Caco-2 (cell line): ENCODE measurements at regions of chr7 and their contacts with region 1.

Region 1: GRCh38 chr7:46145412-46145811 is 224.3 kb upstream of the IGFBP3 start:
- DNase-seq: peak; percentile 68 to 79
- H3K4me3 ChIP-seq: no peak overlapping the region
- H3K4me3 Mint-ChIP-seq: no peak overlapping the region
- H3K27ac Mint-ChIP-seq: peak overlapping the region; percentile 34
- H3K4me1 ChIP-seq: peaks cover 30% of the 10 kb centered on the region
- H3K4me1 Mint-ChIP-seq: peaks cover 33% of the 10 kb centered on the region
- H3K27me3 ChIP-seq: no peaks in the 10 kb centered on the region
- H3K27me3 Mint-ChIP-seq: no peaks in the 10 kb centered on the region
- CTCF ChIP-seq: no peak

Region 2: GRCh38 chr7:46024263-46024916 is 121.0 kb before region 1 on chr7:
- CTCF ChIA-PET with region 1: no interaction called
- POLR2A ChIA-PET with region 1: no interaction called
- intact Hi-C with region 1: loop called (anchors 10 kb)
- DNase-seq: peak in 1 of 2 experiments; percentile 12
- H3K4me3 ChIP-seq: no peak overlapping the region
- H3K4me3 Mint-ChIP-seq: no peak overlapping the region
- H3K27ac Mint-ChIP-seq: no peak overlapping the region
- H3K4me1 ChIP-seq: peaks cover 9% of the 10 kb centered on the region
- H3K4me1 Mint-ChIP-seq: peaks cover 5% of the 10 kb centered on the region
- H3K27me3 ChIP-seq: no peaks in the 10 kb centered on the region
- H3K27me3 Mint-ChIP-seq: peaks cover 3% of the 10 kb centered on the region
- CTCF ChIP-seq: no peak